ENCODE measurements at regions of chr12 and their contacts with region 1.

Region 1: DNA sequence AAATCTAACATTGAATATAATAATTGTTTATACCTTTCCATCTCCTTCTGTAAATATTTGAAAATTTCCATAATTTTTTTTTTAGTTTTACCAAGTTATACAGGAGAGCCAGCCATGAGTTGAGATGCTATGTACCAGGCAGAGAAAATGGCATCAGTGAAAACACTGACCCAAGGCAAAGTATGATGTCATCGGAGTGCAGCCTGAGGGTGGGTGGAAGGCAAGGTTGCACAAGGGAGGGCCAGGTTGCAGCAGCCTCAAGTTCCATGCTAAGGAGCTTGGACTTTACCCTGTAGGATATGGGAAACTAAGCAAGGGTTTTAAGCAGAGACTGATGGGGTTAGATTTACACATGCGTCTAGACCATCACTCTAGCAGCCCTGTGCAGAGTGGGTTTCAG is 441.1 kb downstream of the BCAT1 start:
- DNase-seq: peak; percentile 10
- ATAC-seq: no peak
- H3K4me3 ChIP-seq: no peak overlapping the region
- H3K27ac ChIP-seq: no peak overlapping the region
- H3K4me1 ChIP-seq: no peaks in the 10 kb centered on the region
- H3K27me3 ChIP-seq: no peaks in the 10 kb centered on the region
- CTCF ChIP-seq: no peak
- POLR2A ChIP-seq: no peak
- RAD21 ChIP-seq: no peak

Region 2: DNA sequence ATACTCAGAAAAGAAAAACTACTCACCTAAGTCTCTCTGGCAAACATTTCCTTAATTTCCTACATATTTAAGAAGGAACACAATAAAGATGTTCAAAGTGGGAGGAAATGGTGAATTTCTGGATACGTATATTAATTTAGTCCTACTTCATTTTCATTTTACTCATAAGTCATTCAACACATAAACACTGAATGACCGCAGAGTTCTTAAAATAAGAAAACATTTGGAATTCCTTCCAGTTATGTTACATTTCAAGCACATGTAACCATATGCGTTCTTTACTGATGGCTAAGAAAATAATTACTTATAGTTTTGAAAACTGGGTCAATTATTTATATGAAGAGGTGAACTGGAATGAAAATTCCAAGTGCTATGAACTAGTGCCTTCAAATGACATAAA is 31.8 kb after region 1 on chr12:
- CTCF ChIA-PET with region 1: no interaction called
- POLR2A ChIA-PET with region 1: no interaction called
- dilution Hi-C with region 1: no loop called
- in situ Hi-C with region 1: no loop called
- intact Hi-C with region 1: loop called (anchors 2 kb)
- DNase-seq: peak; percentile 66
- ATAC-seq: no peak; the same call in 1 of the 2 replicates
- H3K4me3 ChIP-seq: no peak overlapping the region
- H3K27ac ChIP-seq: no peak overlapping the region
- H3K4me1 ChIP-seq: peaks cover 16% of the 10 kb centered on the region
- H3K27me3 ChIP-seq: no peaks in the 10 kb centered on the region
- CTCF ChIP-seq: no peak
- POLR2A ChIP-seq: no peak
- RAD21 ChIP-seq: no peak

Region 3: DNA sequence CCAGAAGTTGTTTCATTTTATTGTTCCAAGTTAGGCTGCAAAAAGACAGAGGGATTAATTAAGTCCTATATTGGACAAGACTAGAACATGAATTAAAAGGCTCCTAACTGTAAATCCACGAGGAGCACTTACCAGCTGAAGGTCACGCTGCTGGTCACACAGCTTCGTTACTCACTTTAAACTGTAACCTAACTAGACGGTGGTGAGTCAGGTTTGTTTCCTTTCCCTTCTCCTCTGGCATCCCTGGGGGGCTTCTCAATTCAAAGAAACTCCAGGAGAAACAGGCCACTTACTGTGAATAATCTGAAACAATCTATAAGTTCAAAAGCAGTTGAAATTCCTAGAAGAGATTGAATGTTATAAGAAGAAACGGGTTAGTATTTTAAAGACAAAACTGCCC is 109.6 kb after region 1 on chr12:
- CTCF ChIA-PET with region 1: no interaction called
- POLR2A ChIA-PET with region 1: no interaction called
- dilution Hi-C with region 1: no loop called
- in situ Hi-C with region 1: no loop called
- intact Hi-C with region 1: no loop called
- DNase-seq: peak; percentile 77
- ATAC-seq: peak; percentile 63
- H3K4me3 ChIP-seq: no peak overlapping the region
- H3K27ac ChIP-seq: no peak overlapping the region
- H3K4me1 ChIP-seq: peaks cover 3% of the 10 kb centered on the region
- H3K27me3 ChIP-seq: no peaks in the 10 kb centered on the region
- CTCF ChIP-seq: no peak
- POLR2A ChIP-seq: no peak
- RAD21 ChIP-seq: no peak

Measured in IMR-90 (cell line).